Ascending aorta (tissue), 2 donors: ENCODE measurements at regions of chr2 and their contacts with region 1.

Region 1: DNA sequence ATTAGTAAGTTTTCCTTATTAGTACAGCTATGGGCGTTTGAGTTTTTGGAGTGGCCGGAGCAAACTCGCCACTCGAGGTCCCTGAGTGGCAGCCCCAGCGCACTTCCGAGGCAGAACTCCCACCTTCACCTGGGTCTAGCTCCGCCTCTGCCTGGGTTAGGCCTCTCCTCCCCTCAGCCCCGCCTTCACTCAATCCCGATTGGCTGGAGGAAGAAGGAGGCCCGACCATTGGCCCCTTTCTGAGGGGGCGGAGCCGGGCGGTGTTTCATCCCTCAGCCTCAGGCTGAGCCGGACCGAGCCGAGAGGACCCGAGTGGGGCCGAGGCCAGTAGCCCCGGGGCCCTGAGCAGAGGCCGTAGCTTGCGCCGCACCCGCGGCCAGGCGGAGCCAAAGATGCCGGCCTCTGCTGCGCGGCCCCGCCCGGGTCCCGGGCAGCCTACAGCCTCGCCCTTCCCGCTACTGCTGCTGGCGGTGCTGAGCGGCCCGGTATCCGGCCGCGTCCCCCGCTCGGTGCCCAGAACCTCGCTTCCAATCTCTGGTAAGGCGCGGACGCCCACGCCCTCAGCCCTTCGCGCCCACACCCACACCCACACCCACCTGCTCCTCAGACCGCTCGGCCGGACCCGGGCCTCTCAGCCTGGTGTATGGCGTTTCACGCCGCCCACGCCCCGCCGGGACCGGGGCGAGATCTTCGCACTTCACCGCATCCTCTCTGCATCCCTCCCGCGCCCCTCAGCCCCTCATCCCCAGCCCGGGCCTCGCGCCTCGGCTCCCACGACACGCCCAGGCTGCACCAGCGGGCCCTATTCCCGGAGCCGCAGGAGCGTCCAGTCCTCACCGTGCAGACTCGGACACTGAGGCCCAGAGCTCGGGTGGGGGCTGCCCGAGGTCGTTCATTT is at the start of gene SEMA4F:
- DNase-seq: peak; percentile 86 to 98
- H3K4me3 ChIP-seq: peak within 1 kb of the TSS; percentile 81 to 95
- H3K27ac ChIP-seq: peak within 1 kb of the TSS; percentile 66 to 69
- H3K4me1 ChIP-seq: no peaks in the 10 kb centered on the region
- H3K27me3 ChIP-seq: no peaks in the 10 kb centered on the region
- CTCF ChIP-seq: no peak
- total RNA-seq, gene SEMA4F: 0.32 TPM

Region 2: GRCh38 chr2:73212448-73213176 is 1441.6 kb before region 1 on chr2:
- intact Hi-C with region 1: no loop called
- DNase-seq: peak; percentile 19 to 92
- H3K4me3 ChIP-seq: peak overlapping the region in 1 of 2 donors; percentile 12
- H3K27ac ChIP-seq: peak overlapping the region; percentile 81 to 83
- H3K4me1 ChIP-seq: peaks cover 0 to 20% of the 10 kb centered on the region in 2 donors
- H3K27me3 ChIP-seq: no peaks in the 10 kb centered on the region
- CTCF ChIP-seq: peak; percentile 87 to 92 (median 88)

Region 3: DNA sequence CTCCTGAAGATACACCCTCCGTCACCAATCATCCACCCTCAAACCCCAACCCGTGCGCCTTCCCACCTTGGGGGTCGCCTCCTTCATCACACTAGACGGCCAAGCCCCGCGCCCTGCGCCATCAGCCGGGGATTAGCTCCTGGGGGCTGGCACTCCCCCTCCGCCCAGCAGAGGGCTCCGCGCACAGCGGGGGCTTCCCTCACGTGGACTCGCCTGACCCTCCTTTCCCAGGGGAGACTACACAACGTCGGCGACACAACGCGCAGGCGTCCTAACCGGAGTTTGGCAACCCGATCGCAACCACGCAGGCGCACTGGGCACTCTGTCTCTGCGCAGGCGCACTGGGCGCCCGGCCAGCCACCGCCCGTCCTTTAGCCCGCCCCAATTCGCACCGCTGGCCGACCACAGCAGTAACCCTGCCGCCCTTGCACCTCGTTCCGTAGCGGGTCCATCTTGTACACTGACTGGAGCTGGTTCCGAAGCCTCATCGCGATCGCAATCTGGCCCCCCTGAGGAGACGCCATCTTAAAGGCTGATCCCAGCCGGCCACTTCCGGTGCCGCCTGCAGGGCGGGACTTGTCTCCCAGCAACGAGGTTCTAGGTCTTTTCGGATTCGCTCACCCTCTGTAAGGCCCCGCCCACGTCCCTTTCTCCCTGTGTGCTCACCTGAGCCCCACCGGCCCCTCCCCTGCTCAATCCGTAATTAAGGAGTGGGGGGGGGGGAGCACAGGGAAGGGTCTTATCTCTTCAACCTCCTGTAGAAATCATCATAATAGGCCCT is 146.9 kb before region 1 on chr2 and contains the start of gene PCGF1:
- intact Hi-C with region 1: loop called (anchors 1 kb)
- DNase-seq: peak; percentile 97 to 99
- H3K4me3 ChIP-seq: peak within 1 kb of the TSS; percentile 76 to 78
- H3K27ac ChIP-seq: peak within 1 kb of the TSS; percentile 99
- H3K4me1 ChIP-seq: peaks cover 3 to 24% of the 10 kb centered on the region in 2 donors
- H3K27me3 ChIP-seq: no peaks in the 10 kb centered on the region
- CTCF ChIP-seq: peak in 2 of 3 experiments; percentile 19 to 27
- total RNA-seq, gene PCGF1: not detected